Left colon (tissue), 2 donors: ENCODE measurements at regions of chr16 and their contacts with region 1.

Region 1: GRCh38 chr16:3328643-3329042 is 23.3 kb downstream of the ZNF75A start:
- DNase-seq: peak; percentile 45 to 54
- ATAC-seq: peak; percentile 99

Region 2: DNA sequence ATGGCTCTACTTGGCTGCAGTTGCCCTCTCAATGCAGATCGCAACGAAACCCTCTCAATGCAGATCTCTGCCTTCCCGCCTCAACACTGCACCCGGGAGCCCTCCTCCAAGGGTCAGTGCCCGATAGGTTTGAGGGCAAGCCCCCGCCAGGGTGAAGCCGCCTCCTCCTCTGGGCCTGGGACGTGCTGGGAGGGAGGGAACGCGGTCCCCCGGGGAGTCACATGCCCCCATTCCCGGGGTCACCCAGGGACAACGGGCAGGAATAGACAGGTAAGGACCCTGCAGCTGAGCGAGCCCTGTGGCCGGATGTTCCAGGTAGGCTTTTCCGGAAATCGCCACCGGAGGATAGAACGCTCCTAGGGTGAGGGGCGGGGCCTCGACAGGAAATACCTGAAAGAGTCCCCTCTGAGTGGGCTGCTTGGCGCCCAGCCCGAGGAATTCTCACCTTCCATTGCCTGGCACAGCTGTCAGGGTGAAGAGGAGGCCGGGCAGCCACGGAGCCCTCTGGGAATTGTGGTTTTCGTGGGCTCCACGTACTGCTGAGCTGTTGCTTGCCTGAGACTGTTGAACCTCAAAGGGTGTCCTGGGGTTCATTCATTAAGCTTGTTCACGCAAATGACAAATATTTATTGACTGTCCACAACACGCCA is 85.2 kb after region 1 on chr16:
- intact Hi-C with region 1: loop called in 1 of 2 experiments (anchors 10 kb)
- DNase-seq: no peak
- ATAC-seq: no peak